PC-3 (cell line): ENCODE measurements at regions of chr15 and their contacts with region 1.

Region 1: DNA sequence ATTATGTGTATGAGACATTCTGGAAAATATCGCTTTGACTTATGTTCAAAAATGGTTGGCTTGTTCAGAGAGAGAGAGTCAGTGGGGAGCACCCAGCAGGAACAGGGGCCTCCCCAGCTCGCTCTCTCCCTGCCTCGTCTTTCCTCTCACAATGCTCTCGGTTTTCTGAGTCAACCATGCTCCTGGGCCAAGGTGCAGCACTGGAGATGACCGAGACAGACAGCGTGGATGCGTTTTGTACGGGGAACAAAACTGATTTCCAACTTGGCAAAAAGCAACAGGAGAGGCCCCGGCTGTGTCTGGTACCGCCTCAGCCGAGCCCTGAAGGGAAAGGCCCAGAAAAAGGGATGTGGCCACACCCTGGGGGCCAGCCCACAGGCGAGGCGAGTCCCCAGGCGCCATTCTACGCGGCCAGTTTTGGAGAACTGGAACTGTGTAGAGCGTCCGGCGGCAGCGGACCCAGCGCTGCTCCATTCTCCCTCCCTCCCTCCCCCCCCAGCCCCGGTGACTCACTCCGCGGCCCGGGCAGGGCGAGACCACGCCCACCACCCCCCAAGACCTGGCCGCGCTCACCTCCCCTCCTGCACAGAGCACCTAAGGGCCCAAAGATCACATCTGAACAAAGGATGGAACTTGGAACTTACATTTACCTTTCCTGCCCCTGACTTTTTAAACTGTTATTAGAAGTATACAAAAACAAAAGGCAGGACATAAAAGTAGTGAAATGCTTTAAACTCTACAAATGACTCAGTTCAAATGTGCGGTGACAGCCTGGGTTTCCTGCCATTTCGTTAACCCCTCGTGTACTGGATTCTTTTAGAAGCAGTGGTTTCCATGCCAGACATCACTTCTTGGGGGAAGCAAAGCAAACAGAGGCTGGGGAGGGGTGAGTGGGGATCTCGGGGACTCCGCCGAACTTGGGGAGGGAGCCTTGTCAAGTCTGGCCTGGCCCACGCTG is 12.7 kb downstream of the ATP10A start:
- DNase-seq: peak; percentile 79
- ATAC-seq: peak; percentile 94
- H3K4me3 ChIP-seq: peak overlapping the region; percentile 71
- H3K27ac ChIP-seq: peak overlapping the region; percentile 78
- H3K4me1 ChIP-seq: peaks cover 16% of the 10 kb centered on the region
- H3K27me3 ChIP-seq: no peaks in the 10 kb centered on the region
- CTCF ChIP-seq: no peak

Region 2: DNA sequence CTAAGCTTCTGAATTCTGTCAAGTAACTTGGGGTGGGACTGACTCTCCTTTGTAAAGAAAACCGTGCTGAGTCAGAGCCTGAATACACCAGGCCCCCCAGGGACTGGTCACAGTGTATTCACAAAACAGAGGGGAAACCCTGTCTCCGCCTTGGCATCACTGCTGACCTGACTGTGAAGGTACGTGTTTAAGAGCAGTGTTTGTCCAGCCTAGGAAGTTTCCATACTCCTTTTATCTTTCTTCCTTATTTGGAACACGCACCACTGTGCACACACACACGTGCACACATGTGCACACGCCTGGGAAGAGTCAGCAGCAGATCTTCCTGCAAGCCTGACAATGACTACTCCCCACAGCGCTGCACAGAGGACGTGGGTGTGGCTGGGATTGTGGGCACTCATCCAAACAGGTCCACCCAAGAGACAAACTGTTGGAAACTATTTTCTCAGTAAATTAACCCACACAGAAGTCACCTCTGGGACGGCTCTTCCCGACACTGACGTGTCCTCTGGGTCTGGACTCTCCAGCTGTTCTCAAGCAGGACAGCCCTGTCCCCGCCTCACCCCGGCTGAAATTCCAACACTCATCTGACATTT is 75.0 kb before region 1 on chr15:
- CTCF ChIA-PET with region 1: no interaction called
- POLR2A ChIA-PET with region 1: no interaction called
- intact Hi-C with region 1: loop called (anchors 10 kb)
- DNase-seq: peak; percentile 66
- ATAC-seq: peak; percentile 82
- H3K4me3 ChIP-seq: peak overlapping the region; percentile 13; the same call in 1 of the 2 replicates
- H3K27ac ChIP-seq: peak overlapping the region; percentile 22
- H3K4me1 ChIP-seq: peaks cover 12% of the 10 kb centered on the region; the same call in 1 of the 2 replicates
- H3K27me3 ChIP-seq: no peaks in the 10 kb centered on the region
- CTCF ChIP-seq: no peak

Region 3: DNA sequence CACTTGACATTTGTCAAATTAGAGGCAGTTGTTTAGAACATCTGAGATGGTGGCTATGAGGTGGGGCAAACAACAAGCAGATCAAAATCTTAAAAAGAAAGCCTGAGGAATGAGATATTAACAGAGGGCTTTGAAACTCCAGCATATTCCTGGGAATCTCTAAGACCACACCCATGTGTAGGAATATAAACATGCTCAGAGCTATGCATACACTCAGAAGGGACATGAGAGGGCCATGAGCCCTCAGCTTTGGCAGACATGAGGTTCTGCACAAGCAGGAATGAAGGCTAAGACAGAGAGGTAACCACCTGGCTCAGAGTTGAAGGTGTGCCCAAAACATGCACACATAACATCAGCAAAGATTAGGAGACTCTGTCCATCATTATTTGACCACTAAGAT is 25.2 kb before region 1 on chr15:
- CTCF ChIA-PET with region 1: no interaction called
- POLR2A ChIA-PET with region 1: interaction called, 15 read pairs
- intact Hi-C with region 1: no loop called
- DNase-seq: no peak
- ATAC-seq: no peak
- H3K4me3 ChIP-seq: no peak overlapping the region
- H3K27ac ChIP-seq: no peak overlapping the region
- H3K4me1 ChIP-seq: peaks cover 2% of the 10 kb centered on the region
- H3K27me3 ChIP-seq: no peaks in the 10 kb centered on the region
- CTCF ChIP-seq: no peak

Region 4: DNA sequence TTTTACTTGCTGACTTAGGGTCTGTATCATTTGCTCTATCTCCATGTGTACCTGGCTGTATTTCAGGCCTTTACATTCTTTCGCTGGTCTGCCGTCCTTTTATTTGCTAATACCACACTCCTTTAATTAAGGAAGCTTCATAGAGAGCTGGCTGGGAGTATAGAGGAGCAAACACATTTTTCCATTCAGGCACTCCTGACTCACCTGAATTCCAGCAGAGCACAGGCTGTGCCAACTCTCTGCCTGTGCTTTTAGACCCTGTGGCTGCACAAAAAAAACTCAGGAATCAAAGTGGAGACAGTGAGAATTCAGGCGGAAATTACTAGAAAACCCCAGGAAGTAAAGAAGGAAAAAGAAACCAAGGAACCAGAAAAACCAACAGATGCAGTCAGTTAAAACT is 41.7 kb after region 1 on chr15:
- CTCF ChIA-PET with region 1: no interaction called
- POLR2A ChIA-PET with region 1: no interaction called
- intact Hi-C with region 1: loop called (anchors 5 kb)
- DNase-seq: peak; percentile 71
- ATAC-seq: peak; percentile 60
- H3K4me3 ChIP-seq: no peak overlapping the region
- H3K27ac ChIP-seq: peak overlapping the region; percentile 44
- H3K4me1 ChIP-seq: peaks cover 65% of the 10 kb centered on the region
- H3K27me3 ChIP-seq: no peaks in the 10 kb centered on the region
- CTCF ChIP-seq: no peak

Region 5: GRCh38 chr15:25903024-25903581 is 52.7 kb after region 1 on chr15:
- CTCF ChIA-PET with region 1: no interaction called
- POLR2A ChIA-PET with region 1: interaction called, 3 read pairs
- intact Hi-C with region 1: loop called (anchors 1 kb)
- DNase-seq: peak; percentile 80
- ATAC-seq: peak; percentile 78
- H3K4me3 ChIP-seq: no peak overlapping the region
- H3K27ac ChIP-seq: peak overlapping the region; percentile 74
- H3K4me1 ChIP-seq: peaks cover 47% of the 10 kb centered on the region
- H3K27me3 ChIP-seq: no peaks in the 10 kb centered on the region
- CTCF ChIP-seq: no peak

Region 6: GRCh38 chr15:25933456-25934158 is 83.2 kb after region 1 on chr15:
- CTCF ChIA-PET with region 1: interaction called, 10 read pairs
- POLR2A ChIA-PET with region 1: no interaction called
- intact Hi-C with region 1: loop called (anchors 5 kb)
- DNase-seq: peak; percentile 75
- ATAC-seq: peak; percentile 95
- H3K4me3 ChIP-seq: peak overlapping the region; percentile 59
- H3K27ac ChIP-seq: no peak overlapping the region
- H3K4me1 ChIP-seq: no peaks in the 10 kb centered on the region
- H3K27me3 ChIP-seq: no peaks in the 10 kb centered on the region
- CTCF ChIP-seq: peak; percentile 76

Region 7: GRCh38 chr15:25981114-25981513 is 130.7 kb after region 1 on chr15:
- CTCF ChIA-PET with region 1: no interaction called
- POLR2A ChIA-PET with region 1: no interaction called
- intact Hi-C with region 1: no loop called
- DNase-seq: no peak
- ATAC-seq: no peak
- H3K4me3 ChIP-seq: no peak overlapping the region
- H3K27ac ChIP-seq: no peak overlapping the region
- H3K4me1 ChIP-seq: no peaks in the 10 kb centered on the region
- H3K27me3 ChIP-seq: peaks cover 25% of the 10 kb centered on the region
- CTCF ChIP-seq: no peak